ENCODE measurements at regions of chr3 and their contacts with region 1.

Region 1: DNA sequence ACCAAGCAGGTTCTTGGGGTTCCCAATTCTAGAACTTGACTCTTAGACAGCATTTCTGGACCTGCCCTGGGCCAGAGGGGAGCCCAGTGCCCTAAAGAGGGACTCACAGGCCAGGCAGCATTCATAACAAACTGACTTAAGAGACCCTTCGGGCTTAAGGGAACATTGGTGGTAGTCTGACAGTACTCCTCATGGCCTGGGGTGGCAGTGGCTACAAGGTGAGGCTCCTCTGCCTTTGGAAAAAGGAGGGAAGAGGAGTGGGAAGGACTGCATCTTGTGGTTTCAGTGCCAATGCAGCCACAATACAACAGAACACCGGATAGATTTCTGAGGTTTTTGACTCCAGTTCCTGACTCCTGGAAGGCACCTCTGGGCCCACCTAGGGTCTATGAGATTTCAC is 172.2 kb upstream of the STRIT1 start:
- DNase-seq: no peak
- ATAC-seq: no peak
- H3K4me3 ChIP-seq: no peak overlapping the region
- H3K27ac ChIP-seq: no peak overlapping the region
- H3K4me1 ChIP-seq: no peaks in the 10 kb centered on the region
- H3K27me3 ChIP-seq: no peaks in the 10 kb centered on the region
- CTCF ChIP-seq: no peak
- EP300 ChIP-seq: no peak
- POLR2A ChIP-seq: no peak
- RAD21 ChIP-seq: no peak

Region 2: DNA sequence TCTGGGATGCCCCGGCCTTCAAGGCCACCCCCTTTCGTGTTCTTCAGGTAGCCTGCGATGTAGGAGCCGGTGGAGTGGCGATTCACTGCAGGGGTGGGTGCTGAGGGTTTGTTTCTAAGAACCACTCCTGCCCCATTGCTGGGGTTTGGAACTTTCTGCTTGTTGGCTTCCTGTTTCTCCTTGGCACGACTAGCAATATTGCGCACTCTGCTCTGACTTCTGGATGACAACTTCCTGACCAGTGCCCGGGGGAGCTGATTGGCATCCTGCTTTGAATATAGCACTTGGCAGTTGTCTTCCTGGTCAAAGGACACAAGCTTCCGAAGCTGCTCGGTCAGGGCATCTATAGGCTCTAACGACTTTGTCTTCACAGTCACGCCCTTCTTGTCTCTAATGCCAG is 15.4 kb after region 1 on chr3:
- CTCF ChIA-PET with region 1: no interaction called
- POLR2A ChIA-PET with region 1: no interaction called
- RAD21 ChIA-PET with region 1: no interaction called
- SMC1A ChIA-PET with region 1: no interaction called
- in situ Hi-C with region 1: no loop called
- intact Hi-C with region 1: loop called (anchors 1 kb)
- DNase-seq: no peak
- ATAC-seq: no peak
- H3K4me3 ChIP-seq: no peak overlapping the region
- H3K27ac ChIP-seq: no peak overlapping the region
- H3K4me1 ChIP-seq: no peaks in the 10 kb centered on the region
- H3K27me3 ChIP-seq: no peaks in the 10 kb centered on the region; a peak in 1 of 4 replicates
- CTCF ChIP-seq: no peak
- EP300 ChIP-seq: no peak
- POLR2A ChIP-seq: no peak
- RAD21 ChIP-seq: no peak

Measured in GM12878 (cell line).